CD4-positive, alpha-beta memory T cell (primary cell): ENCODE measurements at regions of chr22 and their contacts with region 1.

Region 1: DNA sequence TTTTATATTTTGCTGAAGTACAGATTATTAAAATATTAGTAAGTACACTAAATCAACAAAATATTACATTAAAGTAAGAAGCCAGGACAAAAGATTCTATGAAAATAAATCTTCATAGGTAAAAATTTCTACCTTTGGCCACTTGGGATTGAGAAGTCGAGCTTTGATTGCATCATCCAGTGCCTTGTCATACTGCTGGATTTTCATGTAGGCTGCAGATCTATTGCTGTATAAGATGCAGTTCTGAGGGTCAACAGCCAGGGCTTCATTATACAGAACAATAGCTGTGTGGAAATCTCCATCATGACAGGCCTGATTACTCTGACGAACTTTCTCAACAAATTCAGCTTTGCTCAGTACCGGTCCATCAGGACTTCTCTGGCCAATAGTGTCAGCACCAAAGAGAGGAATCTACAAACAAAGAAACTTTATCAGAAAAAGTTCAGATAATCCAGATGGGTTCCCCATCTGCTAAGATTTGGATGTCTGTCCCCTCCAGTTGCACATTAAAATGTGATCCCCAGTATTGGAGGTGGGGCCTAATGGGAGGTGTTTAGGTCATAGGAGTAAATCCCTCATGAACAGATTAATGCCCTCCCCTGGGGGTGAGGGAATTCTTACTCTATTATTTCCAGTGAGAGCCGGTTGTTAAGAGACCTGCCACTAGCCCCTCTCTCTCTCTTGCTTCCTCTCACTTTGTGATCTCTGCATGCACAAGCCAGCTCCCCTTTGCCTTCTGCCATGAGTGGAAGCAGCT is 50.0 kb downstream of the TTC28 start:
- DNase-seq: no peak
- H3K4me3 ChIP-seq: no peak overlapping the region
- H3K4me3 Mint-ChIP-seq: no peak overlapping the region
- H3K27ac ChIP-seq: no peak overlapping the region
- H3K27ac Mint-ChIP-seq: no peak overlapping the region
- H3K4me1 ChIP-seq: no peaks in the 10 kb centered on the region
- H3K4me1 Mint-ChIP-seq: no peaks in the 10 kb centered on the region
- H3K27me3 ChIP-seq: no peaks in the 10 kb centered on the region
- H3K27me3 Mint-ChIP-seq: peaks cover 13 to 17% of the 10 kb centered on the region in 2 donors

Region 2: GRCh38 chr22:28619236-28619635 is 10.4 kb before region 1 on chr22:
- CTCF ChIA-PET with region 1: no interaction called
- POLR2A ChIA-PET with region 1: no interaction called
- intact Hi-C with region 1: no loop called
- DNase-seq: no peak
- H3K4me3 ChIP-seq: no peak overlapping the region
- H3K4me3 Mint-ChIP-seq: no peak overlapping the region
- H3K27ac ChIP-seq: no peak overlapping the region
- H3K27ac Mint-ChIP-seq: no peak overlapping the region
- H3K4me1 ChIP-seq: no peaks in the 10 kb centered on the region
- H3K4me1 Mint-ChIP-seq: no peaks in the 10 kb centered on the region
- H3K27me3 ChIP-seq: no peaks in the 10 kb centered on the region
- H3K27me3 Mint-ChIP-seq: peaks cover 20 to 21% of the 10 kb centered on the region in 2 donors

Region 3: DNA sequence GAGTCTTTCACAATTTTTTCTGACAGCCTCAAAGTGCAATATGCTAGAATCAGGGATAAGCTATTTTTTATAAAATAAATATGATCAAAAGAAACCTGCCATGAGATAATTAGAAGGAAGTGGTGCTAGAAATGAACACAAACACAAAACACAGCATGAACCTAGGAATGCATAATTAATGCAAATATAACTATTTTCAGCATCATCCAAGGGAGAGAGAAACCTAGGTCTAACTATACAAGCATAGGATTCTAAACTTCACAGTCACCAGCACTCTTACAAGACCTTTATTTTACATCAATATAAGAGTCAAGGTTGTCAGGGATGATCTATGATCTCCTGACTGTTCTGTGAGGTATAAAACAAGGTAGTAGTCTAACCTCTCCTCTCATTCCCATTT is 20.9 kb after region 1 on chr22:
- CTCF ChIA-PET with region 1: no interaction called
- POLR2A ChIA-PET with region 1: no interaction called
- intact Hi-C with region 1: no loop called
- DNase-seq: no peak
- H3K4me3 ChIP-seq: no peak overlapping the region
- H3K4me3 Mint-ChIP-seq: no peak overlapping the region
- H3K27ac ChIP-seq: no peak overlapping the region
- H3K27ac Mint-ChIP-seq: no peak overlapping the region
- H3K4me1 ChIP-seq: no peaks in the 10 kb centered on the region
- H3K4me1 Mint-ChIP-seq: no peaks in the 10 kb centered on the region
- H3K27me3 ChIP-seq: peaks cover 13% of the 10 kb centered on the region
- H3K27me3 Mint-ChIP-seq: peaks cover 35 to 40% of the 10 kb centered on the region in 2 donors

Region 4: DNA sequence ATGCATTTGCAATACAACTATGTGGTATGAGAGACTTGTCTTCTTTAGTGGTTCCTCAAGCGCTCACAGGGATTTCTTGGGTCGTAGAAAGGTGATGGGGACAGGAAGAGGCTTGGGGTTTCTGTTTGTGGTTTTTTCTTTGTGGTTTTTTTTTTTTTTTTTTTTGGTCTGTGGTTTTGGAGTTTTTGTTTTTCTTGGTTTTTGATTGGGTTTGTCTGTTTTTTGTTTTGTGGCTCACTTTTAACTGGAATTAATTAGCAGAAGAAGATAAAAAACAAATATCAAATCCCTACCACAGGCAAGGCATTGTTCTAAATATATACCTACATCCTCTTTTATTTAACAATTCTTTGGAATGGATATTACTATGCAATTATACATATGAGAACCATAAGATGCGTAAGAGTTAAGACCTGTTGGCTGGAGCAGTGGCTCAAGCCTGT is 44.5 kb after region 1 on chr22:
- CTCF ChIA-PET with region 1: no interaction called
- POLR2A ChIA-PET with region 1: no interaction called
- intact Hi-C with region 1: loop called (anchors 5 kb)
- DNase-seq: peak; percentile 68 to 72 (median 69)
- H3K4me3 ChIP-seq: no peak overlapping the region
- H3K4me3 Mint-ChIP-seq: peak overlapping the region; percentile 70 to 95 (median 86)
- H3K27ac ChIP-seq: no peak overlapping the region
- H3K27ac Mint-ChIP-seq: peak overlapping the region in 6 of 7 donors; percentile 95 to 100 (median 98)
- H3K4me1 ChIP-seq: peaks cover 36% of the 10 kb centered on the region
- H3K4me1 Mint-ChIP-seq: peaks cover 16 to 39% (median 23%) of the 10 kb centered on the region in 4 donors
- H3K27me3 ChIP-seq: peaks cover 36% of the 10 kb centered on the region
- H3K27me3 Mint-ChIP-seq: peaks cover 38 to 49% of the 10 kb centered on the region in 2 donors